MCF 10A (cell line): ENCODE measurements at regions of chr1 and their contacts with region 1.

Region 1: GRCh38 chr1:160006312-160006940 is 25.4 kb downstream of the PIGM start:
- DNase-seq: peak; percentile 87
- H3K4me3 Mint-ChIP-seq: no peak overlapping the region
- H3K27ac Mint-ChIP-seq: no peak overlapping the region
- H3K4me1 Mint-ChIP-seq: peaks cover 11% of the 10 kb centered on the region
- H3K27me3 Mint-ChIP-seq: no peaks in the 10 kb centered on the region
- CTCF ChIP-seq: peak; percentile 99

Region 2: GRCh38 chr1:159132271-159132881 is 874.0 kb before region 1 on chr1:
- CTCF ChIA-PET with region 1: interaction called, 9 read pairs
- POLR2A ChIA-PET with region 1: no interaction called
- intact Hi-C with region 1: loop called (anchors 2 kb)
- DNase-seq: peak; percentile 92
- H3K4me3 Mint-ChIP-seq: no peak overlapping the region
- H3K27ac Mint-ChIP-seq: no peak overlapping the region
- H3K4me1 Mint-ChIP-seq: no peaks in the 10 kb centered on the region
- H3K27me3 Mint-ChIP-seq: no peaks in the 10 kb centered on the region
- CTCF ChIP-seq: peak; percentile 95

Region 3: DNA sequence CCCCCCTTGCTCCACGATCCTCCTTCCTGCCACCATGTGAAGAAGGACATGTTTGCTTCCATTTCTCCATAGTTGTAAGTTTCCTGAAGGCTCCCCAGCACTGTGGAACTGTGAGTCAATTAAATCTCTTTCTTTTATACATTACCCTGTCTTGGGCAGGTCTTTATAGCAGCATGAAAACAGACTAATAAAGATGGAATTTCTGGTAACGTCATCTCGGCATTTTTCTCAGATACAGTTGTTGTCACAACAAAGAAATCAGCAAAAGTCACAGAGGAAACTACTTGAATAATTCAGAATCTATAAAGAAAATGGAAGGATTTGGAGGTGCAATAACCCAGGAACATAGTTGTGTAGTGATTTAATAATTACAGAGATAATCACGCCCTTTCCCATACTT is 414.4 kb before region 1 on chr1:
- CTCF ChIA-PET with region 1: no interaction called
- POLR2A ChIA-PET with region 1: no interaction called
- intact Hi-C with region 1: no loop called
- DNase-seq: no peak
- H3K4me3 Mint-ChIP-seq: no peak overlapping the region
- H3K27ac Mint-ChIP-seq: no peak overlapping the region
- H3K4me1 Mint-ChIP-seq: peaks cover 15% of the 10 kb centered on the region
- H3K27me3 Mint-ChIP-seq: no peaks in the 10 kb centered on the region
- CTCF ChIP-seq: no peak

Region 4: GRCh38 chr1:159881930-159882839 is 124.2 kb before region 1 on chr1:
- CTCF ChIA-PET with region 1: interaction called, 467 read pairs
- POLR2A ChIA-PET with region 1: no interaction called
- intact Hi-C with region 1: no loop called
- DNase-seq: peak; percentile 100
- H3K4me3 Mint-ChIP-seq: no peak overlapping the region
- H3K27ac Mint-ChIP-seq: no peak overlapping the region
- H3K4me1 Mint-ChIP-seq: peaks cover 14% of the 10 kb centered on the region
- H3K27me3 Mint-ChIP-seq: no peaks in the 10 kb centered on the region
- CTCF ChIP-seq: no peak

Region 5: DNA sequence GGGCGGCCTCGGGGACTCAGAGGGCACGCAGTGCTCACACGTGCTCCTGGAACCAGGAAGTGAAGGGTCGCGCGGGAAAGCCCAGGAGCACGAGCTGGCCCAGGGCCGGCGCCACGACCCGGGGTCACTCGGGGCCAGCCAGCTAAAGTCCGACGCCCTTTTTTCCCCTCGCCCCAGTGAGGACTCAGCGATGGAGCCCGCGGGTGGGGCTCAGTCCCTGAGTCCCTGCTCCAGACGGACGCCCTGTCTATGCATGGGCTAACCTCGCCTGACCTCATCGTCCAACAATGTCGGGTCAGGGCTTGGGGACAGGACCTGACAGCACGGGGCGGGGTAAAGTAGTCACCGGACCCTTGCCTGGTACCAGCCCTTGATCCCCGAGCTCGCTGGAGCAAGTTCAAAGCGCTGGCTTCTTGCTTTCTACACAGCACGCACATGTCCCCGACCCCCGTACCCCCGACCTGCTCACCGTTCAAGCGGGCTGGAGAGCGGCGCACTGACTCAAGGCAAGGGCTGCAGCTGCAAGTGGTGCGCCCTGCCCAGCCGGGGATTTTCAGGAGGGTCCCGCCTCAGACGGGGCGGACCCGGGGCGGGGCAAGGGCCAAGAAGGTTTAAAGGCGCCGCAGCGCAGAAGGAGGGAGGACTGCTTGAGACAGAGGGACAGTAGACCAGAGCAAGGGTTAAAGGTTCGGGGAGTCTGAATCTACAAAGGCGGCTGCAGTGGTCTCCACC is 81.3 kb before region 1 on chr1 and contains the start of gene TAGLN2:
- CTCF ChIA-PET with region 1: interaction called, 1,675 read pairs
- POLR2A ChIA-PET with region 1: interaction called, 9 read pairs
- intact Hi-C with region 1: no loop called
- DNase-seq: peak; percentile 97
- H3K4me3 Mint-ChIP-seq: peak within 1 kb of the TSS; percentile 81
- H3K27ac Mint-ChIP-seq: peak within 1 kb of the TSS; percentile 99
- H3K4me1 Mint-ChIP-seq: peaks cover 44% of the 10 kb centered on the region
- H3K27me3 Mint-ChIP-seq: no peaks in the 10 kb centered on the region
- CTCF ChIP-seq: no peak
- total RNA-seq, gene TAGLN2: 464 and 483 TPM in 2 replicates

Region 6: GRCh38 chr1:159960721-159961381 is 45.6 kb before region 1 on chr1:
- CTCF ChIA-PET with region 1: interaction called, 1,675 read pairs
- POLR2A ChIA-PET with region 1: interaction called, 9 read pairs
- intact Hi-C with region 1: loop called (anchors 5 kb)
- DNase-seq: peak; percentile 71
- H3K4me3 Mint-ChIP-seq: peak overlapping the region; percentile 73
- H3K27ac Mint-ChIP-seq: peak overlapping the region; percentile 75
- H3K4me1 Mint-ChIP-seq: peaks cover 49% of the 10 kb centered on the region
- H3K27me3 Mint-ChIP-seq: no peaks in the 10 kb centered on the region
- CTCF ChIP-seq: no peak

Region 7: DNA sequence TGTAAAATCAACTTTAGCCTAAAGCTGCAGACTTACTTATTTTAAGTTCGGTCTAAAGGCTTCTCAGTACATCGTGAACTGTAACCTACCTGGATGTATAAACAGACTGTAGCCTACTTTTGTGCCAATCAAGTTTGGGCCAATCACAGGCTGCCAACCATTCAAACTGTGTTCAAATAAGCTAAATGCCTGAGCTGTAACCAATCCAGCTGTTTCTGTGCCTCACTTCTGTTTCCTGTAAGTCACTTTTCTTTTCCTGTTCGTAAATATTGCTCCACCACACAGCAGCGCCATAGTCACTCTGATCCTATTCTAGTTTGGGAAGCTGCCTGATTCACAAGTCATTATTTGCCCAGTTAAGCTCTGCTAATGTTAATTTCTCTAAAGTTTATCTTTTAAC is 14.9 kb before region 1 on chr1:
- CTCF ChIA-PET with region 1: interaction called, 75 read pairs
- POLR2A ChIA-PET with region 1: interaction called, 3 read pairs
- intact Hi-C with region 1: no loop called
- DNase-seq: peak; percentile 7
- H3K4me3 Mint-ChIP-seq: no peak overlapping the region
- H3K27ac Mint-ChIP-seq: no peak overlapping the region
- H3K4me1 Mint-ChIP-seq: peaks cover 13% of the 10 kb centered on the region
- H3K27me3 Mint-ChIP-seq: no peaks in the 10 kb centered on the region
- CTCF ChIP-seq: no peak

Region 8: GRCh38 chr1:160078512-160079195 is 72.2 kb after region 1 on chr1:
- CTCF ChIA-PET with region 1: interaction called, 28 read pairs
- POLR2A ChIA-PET with region 1: no interaction called
- intact Hi-C with region 1: no loop called
- DNase-seq: peak; percentile 67
- H3K4me3 Mint-ChIP-seq: no peak overlapping the region
- H3K27ac Mint-ChIP-seq: no peak overlapping the region
- H3K4me1 Mint-ChIP-seq: no peaks in the 10 kb centered on the region
- H3K27me3 Mint-ChIP-seq: peaks cover 64% of the 10 kb centered on the region
- CTCF ChIP-seq: peak; percentile 98